ENCODE measurements at regions of chr18 and their contacts with region 1.

Region 1: DNA sequence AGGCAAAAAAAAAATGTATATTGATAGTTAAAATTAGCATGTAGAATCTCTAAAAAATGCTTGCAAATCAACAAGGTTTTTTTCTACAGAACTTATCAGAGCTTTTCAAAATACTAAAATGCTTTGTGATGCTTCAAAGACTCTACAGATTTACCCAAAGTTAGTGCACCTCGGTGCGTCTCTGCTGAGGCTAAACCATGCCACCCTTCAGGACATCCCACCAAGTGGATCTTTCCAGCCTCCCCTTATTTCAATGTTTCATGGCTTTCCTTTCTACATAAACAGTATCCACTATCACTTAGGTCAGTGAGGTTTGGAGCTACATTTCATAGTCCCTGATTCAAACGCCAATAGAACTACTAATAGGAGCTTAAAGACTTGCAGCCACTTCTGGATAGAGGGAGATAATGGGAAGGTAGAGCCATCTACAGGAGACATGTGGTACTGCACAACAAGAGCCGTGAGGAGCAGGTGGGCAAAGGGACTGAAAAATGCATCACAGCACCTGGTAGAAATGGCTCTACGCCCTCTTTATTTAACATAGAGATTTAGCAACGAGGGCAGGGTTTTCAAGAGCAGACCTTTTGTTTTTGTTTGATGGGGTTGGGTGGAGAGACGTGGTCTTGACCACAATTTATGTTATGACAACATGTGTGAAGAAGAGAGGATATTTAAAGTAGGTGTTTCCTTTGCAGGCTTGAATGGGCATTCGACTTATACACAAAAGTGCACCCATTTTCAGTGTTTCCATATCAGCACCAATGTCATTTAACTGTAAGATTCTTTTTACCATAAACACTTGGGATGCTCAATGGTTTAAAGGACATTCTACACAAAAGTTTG is 56.1 kb upstream of the SLC35G4 start:
- DNase-seq: peak; percentile 42
- ATAC-seq: peak; percentile 85
- H3K4me3 ChIP-seq: no peak overlapping the region
- H3K27ac ChIP-seq: no peak overlapping the region
- H3K4me1 ChIP-seq: no peaks in the 10 kb centered on the region
- H3K27me3 ChIP-seq: peaks cover 3% of the 10 kb centered on the region; the same call in 1 of the 2 replicates
- CTCF ChIP-seq: peak; percentile 89

Region 2: DNA sequence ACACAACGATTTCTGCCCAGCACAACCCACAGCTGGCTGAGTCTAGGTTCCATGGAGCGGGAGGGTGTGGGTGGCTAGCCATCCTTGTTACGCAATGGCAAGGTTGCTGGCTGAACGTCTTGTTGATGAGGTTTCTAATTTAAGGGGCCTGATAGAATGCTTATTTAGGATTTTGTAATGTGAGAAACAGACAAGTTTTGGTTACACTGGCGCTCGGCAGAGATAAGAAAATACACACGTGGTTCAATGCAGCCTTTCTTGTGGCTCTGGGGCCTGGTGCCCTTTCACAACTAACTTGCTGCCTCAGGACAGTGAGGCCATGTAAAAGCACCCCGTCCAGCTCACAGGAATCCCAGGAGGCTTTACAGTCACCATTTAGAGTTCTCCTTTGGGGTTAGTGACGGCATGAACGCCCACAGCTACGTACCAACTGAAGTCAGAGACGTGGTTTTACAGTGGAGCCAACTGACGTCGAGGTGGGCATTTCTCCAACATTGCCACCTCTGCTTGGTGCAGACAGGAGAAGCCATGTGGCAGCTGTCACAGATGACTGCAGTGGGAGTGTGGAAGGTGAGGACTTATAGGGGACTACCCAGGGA is 374.3 kb before region 1 on chr18:
- CTCF ChIA-PET with region 1: no interaction called
- POLR2A ChIA-PET with region 1: interaction called, 4 read pairs
- in situ Hi-C with region 1: no loop called
- intact Hi-C with region 1: loop called (anchors 10 kb)
- DNase-seq: no peak
- ATAC-seq: no peak
- H3K4me3 ChIP-seq: no peak overlapping the region
- H3K27ac ChIP-seq: no peak overlapping the region
- H3K4me1 ChIP-seq: no peaks in the 10 kb centered on the region
- H3K27me3 ChIP-seq: no peaks in the 10 kb centered on the region
- CTCF ChIP-seq: no peak

Region 3: DNA sequence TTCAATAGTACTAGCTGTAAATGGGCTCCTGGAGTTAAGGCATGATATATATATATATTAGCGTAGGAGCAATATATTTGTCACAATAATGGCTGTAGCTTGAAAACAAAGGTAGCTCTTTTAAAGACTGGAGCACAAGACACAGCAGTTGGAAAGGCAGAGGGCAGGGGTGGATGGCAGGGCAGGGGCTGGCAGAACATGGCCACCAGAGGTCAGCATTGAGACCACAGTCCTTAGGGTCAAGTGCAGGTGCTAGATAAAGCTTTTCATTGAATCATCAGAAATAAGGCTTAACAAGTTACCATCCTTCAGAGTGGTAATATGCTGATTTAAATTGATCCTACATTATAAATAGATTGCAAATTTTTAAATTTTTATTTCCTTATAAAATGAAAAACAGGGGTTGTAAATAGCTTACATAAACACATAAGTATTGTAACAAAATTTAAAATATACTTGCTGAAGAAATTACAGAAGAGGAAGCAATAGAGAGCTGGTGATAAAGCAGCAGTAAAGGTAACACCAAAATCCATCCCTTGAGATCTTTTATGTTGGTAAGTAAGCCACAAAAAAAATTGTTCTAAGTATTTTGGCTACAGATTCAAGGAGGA is 242.7 kb before region 1 on chr18:
- CTCF ChIA-PET with region 1: interaction called, 7 read pairs
- POLR2A ChIA-PET with region 1: no interaction called
- in situ Hi-C with region 1: no loop called
- intact Hi-C with region 1: loop called (anchors 2 kb)
- DNase-seq: peak; percentile 42
- ATAC-seq: 0 out of 2 replicates have a peak, but pooled peaks have one; percentile 63
- H3K4me3 ChIP-seq: no peak overlapping the region
- H3K27ac ChIP-seq: no peak overlapping the region
- H3K4me1 ChIP-seq: no peaks in the 10 kb centered on the region
- H3K27me3 ChIP-seq: no peaks in the 10 kb centered on the region
- CTCF ChIP-seq: peak; percentile 79

Region 4: DNA sequence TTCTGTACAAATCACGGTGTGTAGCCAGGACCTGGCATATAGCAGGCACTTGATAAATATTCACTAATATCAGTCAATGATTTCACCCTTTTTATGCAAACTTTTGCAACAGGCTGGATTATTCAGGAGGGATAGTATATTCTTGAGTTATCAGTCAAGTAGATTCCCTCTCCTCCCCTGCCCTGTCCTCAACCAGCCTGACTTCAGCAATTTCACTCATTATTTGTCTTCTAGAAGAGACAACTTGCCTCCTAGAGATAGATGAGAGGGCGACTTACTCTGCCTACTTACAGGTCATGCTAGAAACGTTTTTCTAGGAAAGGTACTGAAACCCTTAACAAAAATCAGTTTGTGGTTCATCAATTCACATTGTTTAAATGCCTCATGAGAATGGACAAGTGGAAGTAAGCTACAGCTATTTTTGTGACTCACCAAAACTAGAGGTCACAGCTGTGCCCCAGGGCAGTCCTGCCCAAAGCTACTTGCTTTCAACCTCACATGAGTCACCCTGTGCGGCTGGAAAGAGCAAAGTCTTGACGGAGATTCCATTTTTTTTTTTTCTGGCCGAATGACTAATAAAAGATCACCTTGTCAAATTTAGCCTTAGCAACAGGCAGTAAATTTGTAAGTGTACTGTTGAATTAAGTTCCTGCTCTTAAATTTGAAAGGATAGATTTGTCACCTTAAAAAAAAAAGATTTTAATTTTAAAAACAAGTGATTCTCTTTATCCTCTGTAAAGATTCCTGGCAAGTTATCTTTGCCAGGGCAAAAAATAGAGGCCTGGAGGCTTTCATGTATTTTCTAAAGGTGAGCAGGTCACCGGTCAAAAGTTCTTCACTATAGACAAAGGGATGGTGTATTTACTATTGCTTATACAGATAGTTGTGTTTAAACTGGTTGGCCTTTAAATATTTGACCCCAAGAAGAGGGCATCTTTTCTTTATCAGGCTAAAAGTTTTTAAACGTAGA is 52.9 kb before region 1 on chr18:
- CTCF ChIA-PET with region 1: no interaction called
- POLR2A ChIA-PET with region 1: no interaction called
- in situ Hi-C with region 1: no loop called
- intact Hi-C with region 1: loop called (anchors 10 kb)
- DNase-seq: peak; percentile 81
- ATAC-seq: peak; percentile 97
- H3K4me3 ChIP-seq: no peak overlapping the region
- H3K27ac ChIP-seq: peak overlapping the region; percentile 57; the same call in 1 of the 2 replicates
- H3K4me1 ChIP-seq: no peaks in the 10 kb centered on the region
- H3K27me3 ChIP-seq: no peaks in the 10 kb centered on the region
- CTCF ChIP-seq: no peak

Region 5: GRCh38 chr18:11581286-11581685 is 28.0 kb after region 1 on chr18:
- CTCF ChIA-PET with region 1: no interaction called
- POLR2A ChIA-PET with region 1: no interaction called
- in situ Hi-C with region 1: no loop called
- intact Hi-C with region 1: no loop called
- DNase-seq: no peak
- ATAC-seq: no peak
- H3K4me3 ChIP-seq: no peak overlapping the region
- H3K27ac ChIP-seq: no peak overlapping the region
- H3K4me1 ChIP-seq: no peaks in the 10 kb centered on the region
- H3K27me3 ChIP-seq: peaks cover under 1% of the 10 kb centered on the region
- CTCF ChIP-seq: no peak

Measured in Panc1 (cell line).